ENCODE measurements at regions of chr7 and their contacts with region 1.

Region 1: GRCh38 chr7:111138196-111138569 is 47.3 kb downstream of the LRRN3 start:
- DNase-seq: peak; percentile 82
- H3K4me3 Mint-ChIP-seq: peak overlapping the region; percentile 43
- H3K27ac Mint-ChIP-seq: peak overlapping the region; percentile 92
- H3K4me1 Mint-ChIP-seq: peaks cover 29% of the 10 kb centered on the region
- H3K27me3 Mint-ChIP-seq: no peaks in the 10 kb centered on the region

Region 2: GRCh38 chr7:110922906-110923305 is 215.3 kb before region 1 on chr7:
- CTCF ChIA-PET with region 1: no interaction called
- POLR2A ChIA-PET with region 1: no interaction called
- intact Hi-C with region 1: no loop called
- DNase-seq: no peak
- H3K4me3 Mint-ChIP-seq: no peak overlapping the region
- H3K27ac Mint-ChIP-seq: no peak overlapping the region
- H3K4me1 Mint-ChIP-seq: peaks cover 12% of the 10 kb centered on the region
- H3K27me3 Mint-ChIP-seq: peaks cover 3% of the 10 kb centered on the region

Region 3: GRCh38 chr7:111012799-111013675 is 125.1 kb before region 1 on chr7:
- CTCF ChIA-PET with region 1: no interaction called
- POLR2A ChIA-PET with region 1: interaction called, 3 read pairs
- intact Hi-C with region 1: loop called (anchors 5 kb)
- DNase-seq: peak; percentile 59
- H3K4me3 Mint-ChIP-seq: peak overlapping the region; percentile 59
- H3K27ac Mint-ChIP-seq: peak overlapping the region; percentile 84
- H3K4me1 Mint-ChIP-seq: peaks cover 60% of the 10 kb centered on the region
- H3K27me3 Mint-ChIP-seq: no peaks in the 10 kb centered on the region

Region 4: DNA sequence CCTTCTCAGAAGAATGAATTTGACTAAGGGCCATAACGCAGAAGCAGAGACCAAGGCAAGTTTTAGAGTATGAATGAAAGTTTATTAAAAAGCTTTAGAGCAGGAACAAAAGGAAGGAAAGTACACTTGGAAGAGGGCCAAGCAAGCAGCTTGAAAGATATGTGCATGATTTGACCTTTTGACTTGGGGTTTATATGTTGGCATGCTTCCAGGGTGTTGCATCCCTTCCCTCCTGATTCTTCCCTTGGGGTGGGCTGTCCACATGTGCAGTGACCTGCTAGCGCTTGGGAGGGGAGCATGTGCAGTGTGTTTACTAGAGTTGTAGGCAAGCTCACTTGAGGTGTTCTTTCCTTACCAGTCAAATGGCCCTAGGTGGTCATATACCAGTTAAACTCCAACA is 85.1 kb before region 1 on chr7:
- CTCF ChIA-PET with region 1: no interaction called
- POLR2A ChIA-PET with region 1: no interaction called
- intact Hi-C with region 1: no loop called
- DNase-seq: no peak
- H3K4me3 Mint-ChIP-seq: no peak overlapping the region
- H3K27ac Mint-ChIP-seq: no peak overlapping the region
- H3K4me1 Mint-ChIP-seq: peaks cover 9% of the 10 kb centered on the region
- H3K27me3 Mint-ChIP-seq: no peaks in the 10 kb centered on the region

Region 5: GRCh38 chr7:111083413-111083812 is 54.8 kb before region 1 on chr7:
- CTCF ChIA-PET with region 1: no interaction called
- POLR2A ChIA-PET with region 1: interaction called, 8 read pairs
- intact Hi-C with region 1: loop called (anchors 1 kb)
- DNase-seq: peak; percentile 60
- H3K4me3 Mint-ChIP-seq: peak overlapping the region; percentile 13
- H3K27ac Mint-ChIP-seq: peak overlapping the region; percentile 90
- H3K4me1 Mint-ChIP-seq: peaks cover 70% of the 10 kb centered on the region
- H3K27me3 Mint-ChIP-seq: no peaks in the 10 kb centered on the region

Region 6: GRCh38 chr7:111180338-111180737 is 42.2 kb after region 1 on chr7:
- CTCF ChIA-PET with region 1: no interaction called
- POLR2A ChIA-PET with region 1: no interaction called
- intact Hi-C with region 1: loop called (anchors 1 kb)
- DNase-seq: peak; percentile 8
- H3K4me3 Mint-ChIP-seq: no peak overlapping the region
- H3K27ac Mint-ChIP-seq: no peak overlapping the region
- H3K4me1 Mint-ChIP-seq: peaks cover 10% of the 10 kb centered on the region
- H3K27me3 Mint-ChIP-seq: no peaks in the 10 kb centered on the region

Region 7: GRCh38 chr7:111232249-111233084 is 94.3 kb after region 1 on chr7:
- CTCF ChIA-PET with region 1: no interaction called
- POLR2A ChIA-PET with region 1: no interaction called
- intact Hi-C with region 1: loop called (anchors 5 kb)
- DNase-seq: no peak
- H3K4me3 Mint-ChIP-seq: no peak overlapping the region
- H3K27ac Mint-ChIP-seq: no peak overlapping the region
- H3K4me1 Mint-ChIP-seq: peaks cover 8% of the 10 kb centered on the region
- H3K27me3 Mint-ChIP-seq: no peaks in the 10 kb centered on the region

Measured in activated CD4-positive, alpha-beta memory T cell treated with anti-CD3 and anti-CD28 coated beads for 36 hours (primary cell).